Calu3 (cell line): ENCODE measurements at regions of chr2 and their contacts with region 1.

Region 1: GRCh38 chr2:134815707-134816106 is 22.7 kb upstream of the ACMSD start:
- DNase-seq: no peak
- H3K4me3 Mint-ChIP-seq: no peak overlapping the region
- H3K27ac Mint-ChIP-seq: no peak overlapping the region
- H3K4me1 Mint-ChIP-seq: peaks cover 23% of the 10 kb centered on the region
- H3K27me3 Mint-ChIP-seq: no peaks in the 10 kb centered on the region
- CTCF ChIP-seq: no peak

Region 2: DNA sequence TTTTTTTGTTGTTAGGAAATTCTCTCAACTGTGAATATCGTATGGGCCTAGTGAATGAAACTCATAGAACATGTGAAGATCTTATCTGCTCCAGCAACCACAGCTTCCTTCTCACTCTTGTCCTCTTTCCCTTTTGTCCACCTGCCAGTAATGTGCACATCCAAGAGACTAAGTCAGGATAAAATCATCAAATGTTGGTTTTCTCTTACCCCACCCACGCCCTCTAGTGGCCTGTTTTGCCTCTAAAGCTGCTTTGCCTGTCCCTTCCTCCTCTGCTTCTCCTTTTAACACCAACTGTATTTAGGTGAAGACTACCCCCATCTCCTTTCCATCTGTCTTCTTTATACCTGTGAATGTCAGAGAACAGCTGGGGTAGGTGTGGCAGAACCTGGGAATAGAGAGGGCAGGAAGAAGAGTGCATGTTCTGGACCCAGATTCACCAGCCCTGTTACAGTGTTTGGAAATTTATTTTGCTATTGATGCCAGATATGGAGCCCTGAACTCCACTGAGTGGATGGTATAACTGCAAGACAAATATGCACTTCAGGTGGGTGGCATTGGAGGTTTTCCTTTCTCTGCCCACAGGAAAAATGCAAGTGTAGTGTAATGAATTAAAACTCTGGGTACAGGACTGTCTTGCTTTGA is 570.2 kb before region 1 on chr2:
- CTCF ChIA-PET with region 1: no interaction called
- intact Hi-C with region 1: no loop called
- DNase-seq: peak; percentile 86
- H3K4me3 Mint-ChIP-seq: no peak overlapping the region
- H3K27ac Mint-ChIP-seq: peak overlapping the region; percentile 79
- H3K4me1 Mint-ChIP-seq: peaks cover 43% of the 10 kb centered on the region
- H3K27me3 Mint-ChIP-seq: no peaks in the 10 kb centered on the region
- CTCF ChIP-seq: peak; percentile 75

Region 3: GRCh38 chr2:135030826-135031225 is 215.1 kb after region 1 on chr2:
- CTCF ChIA-PET with region 1: no interaction called
- intact Hi-C with region 1: no loop called
- DNase-seq: no peak
- H3K4me3 Mint-ChIP-seq: no peak overlapping the region
- H3K27ac Mint-ChIP-seq: no peak overlapping the region
- H3K4me1 Mint-ChIP-seq: no peaks in the 10 kb centered on the region
- H3K27me3 Mint-ChIP-seq: no peaks in the 10 kb centered on the region
- CTCF ChIP-seq: no peak

Region 4: DNA sequence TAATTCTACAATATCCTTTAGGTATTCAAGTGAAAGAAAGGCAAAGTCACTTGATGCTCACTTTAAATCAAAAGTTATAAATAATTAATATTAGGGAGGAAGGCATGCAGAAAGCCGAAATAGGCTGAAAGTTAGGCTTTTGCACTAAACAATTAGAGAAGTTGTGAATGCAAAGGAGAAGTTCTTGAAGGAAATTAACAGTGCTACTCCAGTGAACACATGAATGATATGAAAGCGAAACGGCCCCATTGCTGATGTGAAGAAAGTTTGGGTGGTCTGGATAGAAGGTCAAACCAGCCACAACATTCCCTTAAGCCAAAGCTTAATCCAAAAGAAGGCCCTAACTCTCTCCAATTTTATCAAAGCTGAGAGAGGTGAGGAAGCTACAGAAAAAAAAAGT is 1405.3 kb after region 1 on chr2:
- CTCF ChIA-PET with region 1: interaction called, 11 read pairs
- intact Hi-C with region 1: no loop called
- DNase-seq: no peak
- H3K4me3 Mint-ChIP-seq: no peak overlapping the region
- H3K27ac Mint-ChIP-seq: no peak overlapping the region
- H3K4me1 Mint-ChIP-seq: peaks cover 14% of the 10 kb centered on the region
- H3K27me3 Mint-ChIP-seq: no peaks in the 10 kb centered on the region
- CTCF ChIP-seq: no peak